CD4-positive, alpha-beta memory T cell (primary cell): ENCODE measurements at regions of chr9 and their contacts with region 1.

Region 1: DNA sequence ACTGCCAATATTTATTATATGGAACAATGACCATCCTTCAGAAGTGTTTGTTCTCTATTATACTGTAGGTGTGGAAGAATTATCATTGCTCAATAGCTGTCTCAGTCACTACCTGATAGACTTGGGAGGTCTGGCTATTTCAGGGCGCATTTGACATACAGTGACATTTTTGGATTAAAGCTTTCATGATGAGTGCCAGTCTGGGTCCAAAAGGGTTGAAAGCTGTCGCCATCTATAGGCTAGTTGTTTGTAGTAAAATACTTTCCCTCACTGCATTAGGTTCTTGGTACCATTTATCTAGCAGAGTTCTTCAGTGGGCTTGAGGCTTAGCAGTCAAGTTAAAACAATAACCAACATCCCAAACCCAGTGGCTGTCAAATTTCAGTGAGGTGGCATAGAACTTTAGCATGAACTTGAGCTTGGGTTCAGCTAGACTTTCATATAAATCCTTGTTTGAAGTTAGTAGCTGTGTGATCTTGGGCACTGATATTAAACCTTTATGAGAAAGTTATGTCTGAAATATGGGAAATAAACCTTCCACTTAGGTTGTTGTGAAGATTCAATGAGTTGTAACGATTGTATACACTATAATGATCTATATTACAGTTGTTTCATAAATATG is 110.5 kb upstream of the CDKN2B start:
- DNase-seq: peak; percentile 8 to 36 (median 26)
- H3K4me3 ChIP-seq: no peak overlapping the region
- H3K4me3 Mint-ChIP-seq: no peak overlapping the region
- H3K27ac ChIP-seq: no peak overlapping the region
- H3K27ac Mint-ChIP-seq: no peak overlapping the region
- H3K4me1 ChIP-seq: peaks cover 6% of the 10 kb centered on the region
- H3K4me1 Mint-ChIP-seq: peaks cover 0 to 4% (median under 1%) of the 10 kb centered on the region in 4 donors
- H3K27me3 ChIP-seq: no peaks in the 10 kb centered on the region
- H3K27me3 Mint-ChIP-seq: peaks cover 0 to 4% of the 10 kb centered on the region in 2 donors

Region 2: DNA sequence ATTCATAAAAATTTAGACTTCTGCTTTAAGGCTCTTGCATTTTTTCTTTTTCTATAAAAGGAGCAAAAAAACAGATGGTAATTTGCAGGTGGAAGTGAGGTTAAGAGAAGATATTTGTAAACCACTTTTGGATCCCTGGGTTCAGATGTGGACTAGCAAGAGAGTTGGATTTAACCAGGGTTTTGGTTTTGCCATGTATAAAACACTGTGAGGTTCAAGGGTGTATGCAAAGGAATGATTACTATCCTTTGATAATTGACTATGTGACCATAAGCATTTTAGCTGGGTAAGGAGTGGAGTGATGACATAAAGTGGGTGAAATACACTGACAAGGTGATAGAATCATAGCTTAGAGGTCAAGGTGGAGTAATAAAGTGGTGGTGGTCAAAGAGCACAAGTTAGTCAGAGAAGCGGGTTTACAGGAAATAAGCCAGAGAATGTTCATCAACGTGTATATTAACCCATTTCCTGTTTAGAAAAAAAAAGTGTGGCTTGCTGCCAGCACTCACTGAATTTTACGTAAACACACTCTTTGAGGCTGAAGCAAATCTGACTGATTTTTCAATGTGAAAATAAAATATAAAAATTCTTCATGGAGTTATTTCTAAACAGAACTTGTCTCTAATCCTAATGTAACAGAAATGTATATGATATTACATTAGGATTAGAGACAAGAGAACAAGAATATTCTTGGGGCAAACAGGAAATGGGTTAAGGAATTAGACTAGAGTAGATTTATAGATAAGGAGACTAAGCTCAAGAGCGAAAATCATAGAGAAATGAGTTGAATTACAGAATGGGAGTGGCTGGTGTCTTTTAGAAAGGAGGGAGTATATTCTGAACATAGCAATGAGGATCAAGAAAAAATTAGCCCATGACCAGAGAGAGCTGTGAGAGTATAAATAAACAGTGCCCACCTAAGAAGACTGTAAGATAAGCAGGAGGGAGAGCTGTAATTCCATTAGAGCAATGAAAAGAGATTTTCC is 200.0 kb before region 1 on chr9:
- CTCF ChIA-PET with region 1: no interaction called
- POLR2A ChIA-PET with region 1: no interaction called
- intact Hi-C with region 1: no loop called
- DNase-seq: peak; percentile 51 to 79 (median 75)
- H3K4me3 ChIP-seq: peak overlapping the region in 1 of 2 donors; percentile 22
- H3K4me3 Mint-ChIP-seq: peak overlapping the region; percentile 4 to 76 (median 63)
- H3K27ac ChIP-seq: no peak overlapping the region
- H3K27ac Mint-ChIP-seq: peak overlapping the region; percentile 58 to 96 (median 85)
- H3K4me1 ChIP-seq: peaks cover 31% of the 10 kb centered on the region
- H3K4me1 Mint-ChIP-seq: peaks cover 21 to 43% (median 35%) of the 10 kb centered on the region in 4 donors
- H3K27me3 ChIP-seq: no peaks in the 10 kb centered on the region
- H3K27me3 Mint-ChIP-seq: no peaks in the 10 kb centered on the region

Region 3: GRCh38 chr9:21943464-21943863 is 176.2 kb before region 1 on chr9:
- CTCF ChIA-PET with region 1: no interaction called
- POLR2A ChIA-PET with region 1: no interaction called
- intact Hi-C with region 1: no loop called
- DNase-seq: no peak
- H3K4me3 ChIP-seq: no peak overlapping the region
- H3K4me3 Mint-ChIP-seq: no peak overlapping the region
- H3K27ac ChIP-seq: no peak overlapping the region
- H3K27ac Mint-ChIP-seq: no peak overlapping the region
- H3K4me1 ChIP-seq: no peaks in the 10 kb centered on the region
- H3K4me1 Mint-ChIP-seq: no peaks in the 10 kb centered on the region
- H3K27me3 ChIP-seq: peaks cover 4% of the 10 kb centered on the region
- H3K27me3 Mint-ChIP-seq: peaks cover 7 to 10% of the 10 kb centered on the region in 2 donors

Region 4: GRCh38 chr9:22037954-22038690 is 81.5 kb before region 1 on chr9:
- CTCF ChIA-PET with region 1: no interaction called
- POLR2A ChIA-PET with region 1: no interaction called
- intact Hi-C with region 1: loop called (anchors 5 kb)
- DNase-seq: peak in 4 of 5 donors; percentile 22 to 39 (median 32)
- H3K4me3 ChIP-seq: no peak overlapping the region
- H3K4me3 Mint-ChIP-seq: no peak overlapping the region
- H3K27ac ChIP-seq: no peak overlapping the region
- H3K27ac Mint-ChIP-seq: no peak overlapping the region
- H3K4me1 ChIP-seq: peaks cover 11% of the 10 kb centered on the region
- H3K4me1 Mint-ChIP-seq: peaks cover 0 to 8% (median 4%) of the 10 kb centered on the region in 4 donors
- H3K27me3 ChIP-seq: no peaks in the 10 kb centered on the region
- H3K27me3 Mint-ChIP-seq: no peaks in the 10 kb centered on the region

Region 5: DNA sequence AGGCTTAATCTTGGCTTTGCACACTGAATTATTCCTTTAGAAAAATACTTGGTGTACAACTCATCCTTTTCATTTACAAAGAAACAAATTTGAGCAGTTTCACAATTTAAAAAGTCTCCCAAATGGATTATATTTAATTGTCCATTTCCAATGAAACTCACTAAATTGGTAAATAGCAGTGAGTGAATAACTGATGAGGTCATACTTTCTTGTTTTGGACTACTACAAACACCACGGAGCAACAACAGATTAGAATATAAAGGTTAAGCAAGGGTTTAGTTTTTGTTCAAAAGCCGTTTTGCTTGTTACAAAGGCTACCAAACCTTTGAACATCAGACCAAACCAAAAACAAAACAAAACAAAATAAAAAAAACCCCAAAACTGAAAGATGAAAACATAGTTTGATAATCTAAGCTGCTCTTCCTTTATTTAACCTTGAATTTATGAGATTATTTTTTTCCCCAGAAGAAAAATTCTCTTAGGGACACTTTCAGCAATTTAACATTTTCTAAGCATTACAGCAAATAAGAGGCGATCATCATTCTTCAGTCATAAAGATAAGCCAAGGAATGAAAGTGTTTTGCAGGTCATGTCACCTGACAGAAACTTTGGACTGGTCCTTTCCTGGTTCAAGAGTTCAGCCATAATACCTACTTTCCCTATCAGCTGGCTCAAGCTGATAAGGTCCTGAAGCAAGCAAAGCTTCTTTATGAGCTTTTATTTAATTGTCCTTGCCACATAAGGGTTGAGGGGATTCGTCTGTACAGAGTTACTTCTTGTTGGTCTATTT is 10.9 kb before region 1 on chr9:
- CTCF ChIA-PET with region 1: interaction called, 13 read pairs
- POLR2A ChIA-PET with region 1: no interaction called
- intact Hi-C with region 1: no loop called
- DNase-seq: no peak
- H3K4me3 ChIP-seq: no peak overlapping the region
- H3K4me3 Mint-ChIP-seq: no peak overlapping the region
- H3K27ac ChIP-seq: no peak overlapping the region
- H3K27ac Mint-ChIP-seq: no peak overlapping the region
- H3K4me1 ChIP-seq: peaks cover 13% of the 10 kb centered on the region
- H3K4me1 Mint-ChIP-seq: peaks cover 9 to 14% (median 13%) of the 10 kb centered on the region in 4 donors
- H3K27me3 ChIP-seq: no peaks in the 10 kb centered on the region
- H3K27me3 Mint-ChIP-seq: peaks cover 0 to 7% of the 10 kb centered on the region in 2 donors

Region 6: DNA sequence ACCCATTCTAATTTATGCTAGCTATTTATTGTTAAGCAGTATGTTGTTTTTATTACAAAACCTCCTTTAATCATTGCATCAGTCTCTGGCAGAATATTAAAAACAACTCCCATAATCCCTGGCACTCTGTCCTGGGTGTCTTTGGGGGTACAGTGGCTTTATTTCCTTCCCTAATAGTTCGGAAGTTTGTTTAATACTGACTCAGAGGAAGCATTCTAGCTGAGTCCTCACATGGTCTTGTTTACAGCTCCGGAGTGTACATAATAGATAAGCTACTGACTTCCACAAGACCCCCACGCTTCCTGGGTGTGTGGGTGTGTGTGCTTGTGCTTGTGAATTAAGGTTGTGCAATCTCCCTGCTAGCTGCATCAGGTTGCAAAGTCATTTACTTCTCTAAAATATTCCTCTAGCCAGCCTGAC is 39.3 kb after region 1 on chr9:
- CTCF ChIA-PET with region 1: no interaction called
- POLR2A ChIA-PET with region 1: no interaction called
- intact Hi-C with region 1: no loop called
- DNase-seq: no peak
- H3K4me3 ChIP-seq: no peak overlapping the region
- H3K4me3 Mint-ChIP-seq: no peak overlapping the region
- H3K27ac ChIP-seq: no peak overlapping the region
- H3K27ac Mint-ChIP-seq: no peak overlapping the region
- H3K4me1 ChIP-seq: no peaks in the 10 kb centered on the region
- H3K4me1 Mint-ChIP-seq: no peaks in the 10 kb centered on the region
- H3K27me3 ChIP-seq: no peaks in the 10 kb centered on the region
- H3K27me3 Mint-ChIP-seq: peaks cover 3% of the 10 kb centered on the region in 2 donors